ENCODE measurements at regions of chr4 and their contacts with region 1.

Region 1: GRCh38 chr4:126604268-126604867 is 1028.4 kb upstream of the INTU start:
- DNase-seq: peak; percentile 71
- H3K4me3 ChIP-seq: no peak overlapping the region
- H3K27ac ChIP-seq: no peak overlapping the region
- H3K4me1 ChIP-seq: no peaks in the 10 kb centered on the region
- H3K27me3 ChIP-seq: no peaks in the 10 kb centered on the region

Region 2: GRCh38 chr4:125314676-125315575 is 1289.4 kb before region 1 on chr4 and contains the start of gene FAT4:
- in situ Hi-C with region 1: loop called (anchors 25 kb)
- DNase-seq: peak; percentile 99
- H3K4me3 ChIP-seq: peak within 1 kb of the TSS; percentile 92
- H3K27ac ChIP-seq: peak within 1 kb of the TSS; percentile 65
- H3K4me1 ChIP-seq: peaks cover 31% of the 10 kb centered on the region
- H3K27me3 ChIP-seq: no peaks in the 10 kb centered on the region
- total RNA-seq, gene FAT4: 22.0 and 22.4 TPM in 2 replicates

Region 3: DNA sequence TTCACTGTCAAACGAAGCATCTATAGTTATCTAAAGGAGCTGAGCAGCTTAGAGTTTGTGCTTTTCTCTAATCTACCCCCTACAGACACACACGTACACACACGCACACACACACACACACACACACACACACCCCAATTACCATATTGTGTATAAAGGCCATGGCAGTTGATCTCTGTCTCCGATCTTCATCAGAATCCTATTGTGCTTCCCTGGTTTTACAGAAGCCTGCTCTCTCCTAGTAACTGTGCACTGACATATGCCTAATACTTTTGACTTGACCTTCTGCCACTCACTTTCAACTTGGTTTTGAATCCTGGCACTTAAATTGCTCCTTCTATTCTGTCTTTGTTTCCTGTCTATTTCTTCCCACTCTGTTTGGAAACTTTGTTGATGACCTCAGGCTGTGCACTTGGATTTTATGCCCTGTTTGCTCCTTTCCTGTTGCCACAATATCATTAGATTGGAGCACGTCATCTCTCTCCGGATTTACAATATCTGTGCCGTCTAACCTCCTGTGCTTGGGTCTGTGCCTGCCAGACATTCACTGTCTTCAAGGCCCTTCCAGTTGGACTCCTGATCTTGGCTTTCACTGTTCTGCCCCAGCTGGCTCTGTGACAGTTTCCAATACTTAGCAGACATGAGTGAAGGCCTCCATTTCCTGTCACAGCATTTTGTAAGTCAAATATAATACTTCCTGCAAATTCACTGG is 361.5 kb before region 1 on chr4:
- in situ Hi-C with region 1: no loop called
- DNase-seq: peak; percentile 10
- H3K4me3 ChIP-seq: no peak overlapping the region
- H3K27ac ChIP-seq: no peak overlapping the region
- H3K4me1 ChIP-seq: no peaks in the 10 kb centered on the region; the same call in 1 of the 2 replicates
- H3K27me3 ChIP-seq: no peaks in the 10 kb centered on the region

Region 4: GRCh38 chr4:126850286-126850685 is 245.9 kb after region 1 on chr4:
- in situ Hi-C with region 1: no loop called
- DNase-seq: peak; percentile 93
- H3K4me3 ChIP-seq: no peak overlapping the region
- H3K27ac ChIP-seq: peak overlapping the region; percentile 34
- H3K4me1 ChIP-seq: peaks cover 36% of the 10 kb centered on the region
- H3K27me3 ChIP-seq: no peaks in the 10 kb centered on the region

Region 5: DNA sequence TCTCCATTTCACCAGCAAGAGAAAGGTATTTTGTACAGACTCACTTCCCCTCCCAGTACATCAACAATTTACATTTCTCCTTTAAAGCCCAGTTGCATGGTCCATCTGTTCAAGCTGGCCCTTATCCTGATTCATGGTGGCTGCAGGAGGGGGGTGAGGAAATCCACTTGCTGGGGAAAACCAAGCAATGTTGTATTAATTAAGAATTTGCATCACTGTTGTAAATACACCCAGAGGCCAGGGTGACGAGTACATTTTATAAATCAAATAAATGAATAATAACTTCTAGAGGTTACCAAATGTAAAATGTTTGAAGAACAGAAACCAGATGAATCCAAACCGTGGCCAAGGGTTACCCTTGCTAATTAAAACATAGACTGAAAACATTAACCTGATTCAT is 632.5 kb after region 1 on chr4:
- in situ Hi-C with region 1: no loop called
- DNase-seq: peak; percentile 18
- H3K4me3 ChIP-seq: no peak overlapping the region
- H3K27ac ChIP-seq: no peak overlapping the region
- H3K4me1 ChIP-seq: no peaks in the 10 kb centered on the region
- H3K27me3 ChIP-seq: no peaks in the 10 kb centered on the region

Region 6: DNA sequence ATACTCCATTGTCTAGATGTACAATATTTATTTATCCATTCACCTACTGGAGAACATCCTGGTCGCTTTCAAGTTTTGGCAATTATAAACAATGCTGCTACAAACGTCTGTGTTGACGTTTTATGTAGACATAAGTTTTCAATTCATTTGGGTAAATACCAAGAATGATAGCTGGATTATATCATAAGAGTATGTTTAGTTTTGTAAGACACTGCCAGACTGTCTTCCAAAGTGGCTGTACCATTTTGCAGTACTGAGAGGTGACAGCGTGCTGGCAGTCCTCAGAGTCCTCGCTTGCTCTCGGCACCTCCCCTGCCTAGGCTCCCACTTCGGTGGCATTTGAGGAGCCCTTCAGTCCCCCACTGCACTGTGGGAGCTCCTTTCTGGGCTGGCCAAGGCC is 775.1 kb after region 1 on chr4:
- in situ Hi-C with region 1: loop called (anchors 25 kb)
- DNase-seq: no peak
- H3K4me3 ChIP-seq: no peak overlapping the region
- H3K27ac ChIP-seq: no peak overlapping the region
- H3K4me1 ChIP-seq: no peaks in the 10 kb centered on the region
- H3K27me3 ChIP-seq: no peaks in the 10 kb centered on the region

Measured in GM23248 (cell line).